Cardiac septum (tissue), 1 donor: ENCODE measurements at regions of chr3 and their contacts with region 1.

Region 1: DNA sequence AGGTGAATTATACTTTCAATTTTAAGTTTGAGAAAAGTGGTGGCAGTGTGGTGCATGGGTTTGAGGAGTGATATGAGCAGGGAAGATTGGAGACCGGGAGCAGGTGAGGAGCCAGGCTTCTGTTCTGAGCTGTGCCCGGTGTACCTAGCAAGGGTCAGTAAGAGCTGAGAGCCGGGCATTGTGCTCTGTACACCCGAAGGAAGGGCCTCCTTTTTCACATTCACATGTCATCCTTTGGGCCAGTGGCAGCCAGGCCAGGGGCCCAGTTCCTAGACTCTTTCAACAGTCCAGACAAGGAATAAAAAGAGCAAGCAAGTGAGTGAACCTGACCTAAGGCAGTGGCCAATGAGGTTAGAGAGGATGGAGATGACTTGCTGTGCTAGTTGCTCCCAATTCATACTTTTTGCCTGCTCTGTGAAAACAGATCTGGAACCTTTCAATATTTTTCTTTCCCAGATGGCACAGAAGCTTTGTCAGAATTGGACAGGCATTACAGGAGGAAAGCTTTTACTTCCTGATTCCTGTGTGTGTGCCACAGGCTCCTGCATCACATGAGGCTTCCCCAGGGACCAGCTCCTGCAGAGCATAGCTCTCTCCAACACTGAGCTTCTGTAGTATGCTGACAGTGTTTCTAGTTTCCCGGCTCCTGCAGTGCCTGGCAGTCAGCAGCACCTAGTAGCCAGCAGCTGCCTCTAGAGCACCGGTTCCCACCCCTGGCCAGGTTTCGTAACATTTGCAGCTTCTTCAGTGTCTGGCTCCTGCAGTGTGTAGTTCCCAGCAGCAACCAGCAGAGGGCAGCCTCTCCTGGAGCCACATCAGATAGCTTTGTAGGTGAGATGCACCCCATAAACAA is 5.3 kb upstream of the TRA2B start:
- DNase-seq: peak; percentile 92

Region 2: GRCh38 chr3:185659942-185660921 is 282.9 kb before region 1 on chr3:
- intact Hi-C with region 1: loop called (anchors 10 kb)
- DNase-seq: peak; percentile 83

Region 3: DNA sequence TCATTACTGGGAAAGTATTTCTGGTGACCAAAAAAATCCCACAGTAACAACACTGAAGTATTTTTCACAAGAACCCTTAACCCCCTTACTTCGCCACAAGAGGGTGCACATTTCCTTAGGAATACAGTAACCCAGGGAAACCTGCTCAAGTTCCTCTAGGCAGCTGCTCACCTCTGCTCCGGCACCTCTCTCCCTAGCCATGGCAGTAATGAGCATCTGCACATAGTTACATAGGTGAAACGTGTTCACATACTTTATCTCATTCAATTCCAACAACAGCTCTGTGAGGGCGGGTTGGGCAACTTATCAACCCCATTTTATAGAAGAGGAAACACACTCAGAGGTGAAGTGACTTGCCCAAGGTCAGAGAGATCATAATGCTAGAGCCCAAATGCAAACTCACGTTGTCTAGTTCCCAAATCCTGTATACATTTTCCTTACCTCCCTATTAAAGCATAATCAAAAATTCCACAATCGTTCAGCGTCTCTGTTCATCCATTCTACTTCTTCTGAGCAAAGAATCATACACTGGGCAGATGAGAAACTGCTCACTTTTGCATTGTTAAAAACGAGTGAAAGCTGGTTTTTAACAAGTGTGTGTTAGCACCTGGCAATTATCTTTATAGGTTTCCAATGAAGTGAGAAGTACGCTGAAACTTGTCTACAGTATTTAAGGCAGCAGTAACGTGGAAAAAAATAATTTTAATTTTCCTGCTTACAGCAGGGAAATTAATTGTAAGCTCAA is 209.0 kb before region 1 on chr3:
- intact Hi-C with region 1: loop called (anchors 10 kb)
- DNase-seq: no peak

Region 4: DNA sequence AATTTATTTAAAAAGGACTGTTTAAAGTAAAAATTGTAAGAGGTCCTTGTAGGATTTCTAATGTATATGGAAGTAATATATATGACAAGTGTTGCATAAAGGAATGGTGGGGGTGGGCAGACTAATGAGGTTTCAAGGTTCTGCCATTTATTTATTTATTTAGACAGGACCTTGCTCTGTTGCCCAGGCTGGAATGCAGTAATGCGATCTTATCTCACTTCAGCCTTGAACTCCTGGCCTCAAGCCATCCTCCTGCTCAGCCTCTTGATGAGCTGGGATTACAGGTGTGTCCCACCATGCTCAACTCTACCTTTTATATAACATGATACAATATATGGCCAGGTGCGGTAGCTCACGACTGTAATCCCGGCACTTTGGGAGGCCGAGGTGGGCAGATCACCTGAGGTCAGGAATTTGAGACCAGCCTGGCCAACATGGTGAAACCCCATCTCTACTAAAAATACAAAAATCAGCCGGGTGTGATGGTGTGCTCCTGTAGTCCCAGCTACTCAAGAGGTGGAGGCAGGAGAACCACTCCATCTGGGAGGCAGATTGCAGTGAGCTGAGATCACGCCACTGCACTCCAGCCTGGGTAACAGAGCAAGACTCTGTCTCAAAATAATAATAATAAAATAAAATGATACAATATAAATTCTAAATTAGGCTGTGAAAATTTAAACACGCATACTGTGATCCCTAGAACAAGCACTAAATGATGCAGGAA is 84.5 kb before region 1 on chr3:
- intact Hi-C with region 1: no loop called
- DNase-seq: no peak

Region 5: GRCh38 chr3:185912512-185912911 is 30.6 kb before region 1 on chr3:
- intact Hi-C with region 1: no loop called
- DNase-seq: no peak

Region 6: DNA sequence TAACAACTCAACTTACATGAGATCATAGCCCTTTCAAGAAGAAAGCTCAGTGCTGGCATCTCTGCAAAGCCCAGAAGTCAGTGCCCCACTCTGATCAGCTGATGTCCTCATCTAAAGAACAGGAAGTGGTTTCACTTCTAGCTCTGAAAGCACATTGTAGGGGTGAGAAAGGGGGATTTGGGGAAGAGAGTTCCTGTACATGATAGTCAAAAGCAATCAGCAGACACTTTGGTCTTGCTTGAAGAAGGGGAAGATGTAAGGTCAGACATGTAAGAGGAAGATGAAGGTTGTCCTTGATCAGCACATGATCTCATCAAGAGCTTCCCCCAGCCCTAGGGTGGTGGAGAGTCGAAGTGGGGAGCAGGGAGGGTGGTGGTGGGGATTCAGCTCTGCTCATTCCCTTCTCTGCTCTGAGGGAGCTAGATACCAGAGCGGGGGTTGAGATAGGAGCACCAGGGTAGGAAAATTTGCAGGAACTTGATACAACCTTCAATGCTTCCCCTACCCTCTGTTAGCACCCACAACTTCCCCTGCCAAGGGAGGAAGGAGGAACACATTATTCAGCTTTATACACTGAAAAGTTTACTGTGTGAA is 242.2 kb after region 1 on chr3:
- intact Hi-C with region 1: no loop called
- DNase-seq: no peak